ENCODE measurements at regions of chr5 and their contacts with region 1.

Region 1: GRCh38 chr5:81297531-81297930 is 3.9 kb upstream of the ZCCHC9 start:
- DNase-seq: no peak
- ATAC-seq: no peak
- H3K4me3 ChIP-seq: no peak overlapping the region
- H3K27ac ChIP-seq: no peak overlapping the region
- H3K4me1 ChIP-seq: peaks cover 5% of the 10 kb centered on the region
- H3K27me3 ChIP-seq: no peaks in the 10 kb centered on the region

Region 2: DNA sequence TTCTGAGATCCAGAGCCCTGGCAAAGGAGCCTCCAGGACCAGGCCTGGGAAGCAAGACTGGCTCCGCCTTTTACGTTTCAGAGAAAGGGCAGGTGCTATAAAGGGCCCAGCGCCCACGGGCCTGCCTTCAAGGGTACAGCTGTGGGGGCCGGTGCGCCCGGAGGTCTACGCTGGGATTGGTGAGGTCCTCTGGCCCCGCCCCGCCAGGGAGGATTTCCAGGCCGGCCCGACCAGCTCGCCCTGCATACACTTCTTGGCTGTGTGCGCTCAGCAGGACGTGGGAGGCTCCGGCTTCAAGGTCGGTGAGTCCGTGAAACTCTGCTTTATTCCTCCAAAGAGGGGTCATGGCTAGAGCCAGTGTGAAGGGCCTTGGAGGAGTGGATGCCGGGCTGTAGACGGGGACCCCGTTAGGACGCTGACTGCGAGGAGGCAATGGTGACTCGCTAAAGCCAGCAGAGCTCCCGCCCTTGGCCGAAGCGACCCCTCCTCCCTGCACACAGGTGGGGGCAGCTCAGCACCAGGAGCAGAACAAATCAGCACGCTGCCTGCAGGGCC is 64.4 kb before region 1 on chr5 and contains the start of gene CKMT2:
- intact Hi-C with region 1: loop called in 1 of 4 experiments (anchors 5 kb)
- DNase-seq: peak; percentile 88 to 95 (median 94)
- ATAC-seq: peak; percentile 90 to 93
- H3K4me3 ChIP-seq: peak within 1 kb of the TSS; percentile 70
- H3K27ac ChIP-seq: peak within 1 kb of the TSS; percentile 98
- H3K4me1 ChIP-seq: peaks cover 18% of the 10 kb centered on the region
- H3K27me3 ChIP-seq: no peaks in the 10 kb centered on the region
- total RNA-seq, gene CKMT2: 816 to 1,016 (median 864) TPM

Region 3: DNA sequence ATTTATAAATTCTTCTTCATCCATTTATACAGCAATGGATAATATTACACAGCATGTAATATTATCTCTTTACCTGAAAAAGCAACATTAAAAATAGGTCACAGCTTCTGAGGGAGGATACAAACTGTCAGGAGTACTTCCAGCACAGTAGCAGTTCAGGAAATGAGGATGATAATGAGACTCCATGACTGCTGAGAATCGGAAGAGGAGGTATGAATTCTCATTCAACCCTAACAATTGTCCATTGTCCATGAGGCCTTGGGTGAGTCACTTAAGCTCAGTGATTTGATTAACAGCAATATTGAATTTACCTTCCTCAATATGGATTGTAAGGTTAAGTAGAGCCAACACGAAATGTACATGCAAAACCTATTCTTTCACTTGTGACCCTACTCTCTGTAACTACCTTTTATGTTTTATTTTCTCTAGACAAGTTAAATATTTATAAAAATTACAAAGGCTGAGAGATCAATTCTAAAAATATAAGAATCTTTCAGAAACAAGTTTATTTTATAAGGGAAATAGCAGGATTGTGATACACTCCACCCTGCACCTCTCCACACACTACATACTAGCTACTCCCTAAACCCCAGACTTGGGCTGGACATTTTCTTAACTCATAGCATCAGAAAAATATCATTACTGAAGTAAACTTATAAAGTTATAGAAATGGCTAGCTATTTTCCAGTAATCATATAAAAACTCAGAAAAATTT is 255.5 kb after region 1 on chr5:
- intact Hi-C with region 1: no loop called
- DNase-seq: no peak
- ATAC-seq: peak in 1 of 2 donors; percentile 59
- H3K4me3 ChIP-seq: no peak overlapping the region
- H3K27ac ChIP-seq: no peak overlapping the region
- H3K4me1 ChIP-seq: no peaks in the 10 kb centered on the region
- H3K27me3 ChIP-seq: no peaks in the 10 kb centered on the region

Measured in right cardiac atrium (tissue), 5 donors.